Ovary (tissue), 10 donors: ENCODE measurements at regions of chr6 and their contacts with region 1.

Region 1: GRCh38 chr6:1654054-1654453 is 44.3 kb downstream of the FOXC1 start:
- DNase-seq: no peak
- H3K4me3 ChIP-seq: no peak overlapping the region
- H3K27ac ChIP-seq: no peak overlapping the region
- H3K4me1 ChIP-seq: no peaks in the 10 kb centered on the region
- H3K27me3 ChIP-seq: no peaks in the 10 kb centered on the region
- CTCF ChIP-seq: no peak
- EP300 ChIP-seq: no peak
- POLR2A ChIP-seq: no peak

Region 2: GRCh38 chr6:514396-514973 is 1139.6 kb before region 1 on chr6:
- intact Hi-C with region 1: loop called in 1 of 4 experiments (anchors 5 kb)
- DNase-seq: no peak
- H3K4me3 ChIP-seq: no peak overlapping the region
- H3K27ac ChIP-seq: no peak overlapping the region
- H3K4me1 ChIP-seq: no peaks in the 10 kb centered on the region
- H3K27me3 ChIP-seq: no peaks in the 10 kb centered on the region
- CTCF ChIP-seq: no peak
- EP300 ChIP-seq: no peak
- POLR2A ChIP-seq: no peak

Region 3: DNA sequence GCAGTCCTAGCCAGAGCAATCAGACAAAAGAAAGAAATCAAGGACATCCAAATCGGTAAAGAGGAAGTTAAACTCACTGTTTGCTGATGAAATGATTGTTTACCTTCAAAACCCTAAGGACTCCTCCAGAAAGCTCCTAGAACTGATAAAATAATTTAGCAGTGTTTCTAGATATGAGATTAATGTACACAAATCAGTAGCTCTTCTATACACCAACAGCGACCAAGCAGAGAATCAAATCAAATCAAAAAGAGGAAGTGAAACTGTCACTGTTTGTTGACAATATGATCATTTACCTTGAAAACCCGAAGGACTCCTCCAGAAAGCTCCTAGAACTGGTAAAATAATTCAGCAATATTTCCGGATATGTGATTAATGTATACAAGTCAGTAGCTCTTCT is 1227.4 kb after region 1 on chr6:
- intact Hi-C with region 1: no loop called
- DNase-seq: no peak
- H3K4me3 ChIP-seq: no peak overlapping the region
- H3K27ac ChIP-seq: no peak overlapping the region
- H3K4me1 ChIP-seq: peaks cover 9% of the 10 kb centered on the region
- H3K27me3 ChIP-seq: no peaks in the 10 kb centered on the region
- CTCF ChIP-seq: no peak
- EP300 ChIP-seq: no peak
- POLR2A ChIP-seq: no peak